Activated B cell treated with CpG ODN at 0.5 μM for 24 hours (primary cell): ENCODE measurements at regions of chr17 and their contacts with region 1.

Region 1: GRCh38 chr17:42928714-42929496 is 28.3 kb downstream of the G6PC1 start:
- DNase-seq: no peak
- ATAC-seq: peak; percentile 89
- H3K4me3 Mint-ChIP-seq: no peak overlapping the region
- H3K27ac Mint-ChIP-seq: peak overlapping the region; percentile 75
- H3K4me1 Mint-ChIP-seq: peaks cover 9% of the 10 kb centered on the region
- H3K27me3 Mint-ChIP-seq: peaks cover 2% of the 10 kb centered on the region
- CTCF ChIP-seq: no peak

Region 2: GRCh38 chr17:42720996-42721583 is 207.8 kb before region 1 on chr17:
- CTCF ChIA-PET with region 1: no interaction called
- POLR2A ChIA-PET with region 1: no interaction called
- intact Hi-C with region 1: loop called (anchors 1 kb)
- DNase-seq: no peak
- ATAC-seq: peak; percentile 73
- H3K4me3 Mint-ChIP-seq: no peak overlapping the region
- H3K27ac Mint-ChIP-seq: peak overlapping the region; percentile 20
- H3K4me1 Mint-ChIP-seq: peaks cover 2% of the 10 kb centered on the region
- H3K27me3 Mint-ChIP-seq: no peaks in the 10 kb centered on the region
- CTCF ChIP-seq: no peak

Region 3: GRCh38 chr17:42798383-42799380 is 130.2 kb before region 1 on chr17 and contains the starts of genes CNTD1 and COA3:
- CTCF ChIA-PET with region 1: no interaction called
- POLR2A ChIA-PET with region 1: interaction called, 11 read pairs
- intact Hi-C with region 1: no loop called
- DNase-seq: peak; percentile 69
- ATAC-seq: peak; percentile 100
- H3K4me3 Mint-ChIP-seq: peak within 1 kb of the TSS; percentile 97
- H3K27ac Mint-ChIP-seq: peak within 1 kb of the TSS; percentile 81
- H3K4me1 Mint-ChIP-seq: peaks cover 28% of the 10 kb centered on the region
- H3K27me3 Mint-ChIP-seq: no peaks in the 10 kb centered on the region
- CTCF ChIP-seq: no peak
- total RNA-seq, gene CNTD1: not detected in 2 replicates
- total RNA-seq, gene COA3: 41.4 and 48.0 TPM in 2 replicates

Region 4: GRCh38 chr17:42843358-42843934 is 85.5 kb before region 1 on chr17:
- CTCF ChIA-PET with region 1: interaction called, 7 read pairs
- POLR2A ChIA-PET with region 1: no interaction called
- intact Hi-C with region 1: loop called (anchors 2 kb)
- DNase-seq: no peak
- ATAC-seq: peak; percentile 45
- H3K4me3 Mint-ChIP-seq: no peak overlapping the region
- H3K27ac Mint-ChIP-seq: no peak overlapping the region
- H3K4me1 Mint-ChIP-seq: peaks cover 17% of the 10 kb centered on the region
- H3K27me3 Mint-ChIP-seq: no peaks in the 10 kb centered on the region
- CTCF ChIP-seq: no peak